Heart right ventricle (tissue), 16 donors: ENCODE measurements at regions of chr12 and their contacts with region 1.

Region 1: DNA sequence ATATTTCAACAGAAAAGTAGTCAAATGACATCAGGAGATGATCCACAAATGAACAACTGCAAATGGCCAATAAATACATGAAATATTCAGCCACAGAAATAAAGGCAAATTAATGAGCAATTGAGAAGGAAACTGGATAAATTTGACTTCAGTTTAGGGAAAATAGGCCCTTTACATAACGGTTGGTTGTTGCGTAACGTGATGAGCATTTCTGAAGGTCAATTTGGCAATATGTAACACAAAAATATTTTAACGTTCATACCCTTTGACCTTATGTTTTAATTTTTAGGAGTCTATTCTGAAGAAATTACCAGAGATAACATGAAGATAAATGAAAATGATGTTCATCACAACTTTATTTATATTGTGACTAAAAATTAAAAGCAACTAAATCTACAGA is 14.7 kb upstream of the MSRB3 start:
- DNase-seq: no peak
- ATAC-seq: no peak
- H3K4me3 ChIP-seq: no peak overlapping the region
- H3K27ac ChIP-seq: no peak overlapping the region
- H3K4me1 ChIP-seq: no peaks in the 10 kb centered on the region
- H3K27me3 ChIP-seq: no peaks in the 10 kb centered on the region
- CTCF ChIP-seq: no peak

Region 2: DNA sequence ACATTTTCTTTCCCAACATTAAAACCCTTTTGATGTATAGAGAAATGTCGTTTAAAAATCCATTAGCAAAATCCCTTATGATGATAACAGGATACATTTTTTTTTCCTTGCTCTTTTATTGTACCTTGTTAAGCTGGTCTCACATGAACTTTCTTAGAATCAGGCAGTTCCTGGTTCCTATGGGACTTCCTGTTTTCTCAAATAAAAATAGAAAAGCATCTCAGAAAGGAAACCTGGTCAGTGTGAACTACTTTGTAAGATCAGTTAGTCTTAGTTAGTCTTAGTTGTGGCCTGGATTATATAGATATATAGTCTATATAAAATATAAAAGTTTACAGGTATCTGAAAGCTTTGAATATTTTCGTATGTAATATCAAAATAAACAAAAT is 54.1 kb before region 1 on chr12:
- intact Hi-C with region 1: loop called in 1 of 10 experiments (anchors 5 kb)
- DNase-seq: no peak
- ATAC-seq: peak in 5 of 8 donors; percentile 42 to 77 (median 64)
- H3K4me3 ChIP-seq: no peak overlapping the region
- H3K27ac ChIP-seq: peak overlapping the region in 3 of 10 donors; percentile 25 to 46 (median 32)
- H3K4me1 ChIP-seq: peaks cover 0 to 55% (median 28%) of the 10 kb centered on the region in 9 donors
- H3K27me3 ChIP-seq: no peaks in the 10 kb centered on the region
- CTCF ChIP-seq: no peak